PC-9 (cell line): ENCODE measurements at regions of chr15 and their contacts with region 1.

Region 1: GRCh38 chr15:78075490-78076230 is 1.9 kb downstream of the TBC1D2B start:
- DNase-seq: peak in 1 of 2 experiments; percentile 31
- H3K4me3 ChIP-seq: no peak overlapping the region; the same call in 1 of the 2 replicates
- H3K27ac ChIP-seq: no peak overlapping the region
- H3K4me1 ChIP-seq: peaks cover 17% of the 10 kb centered on the region
- H3K27me3 ChIP-seq: no peaks in the 10 kb centered on the region
- CTCF ChIP-seq: no peak

Region 2: DNA sequence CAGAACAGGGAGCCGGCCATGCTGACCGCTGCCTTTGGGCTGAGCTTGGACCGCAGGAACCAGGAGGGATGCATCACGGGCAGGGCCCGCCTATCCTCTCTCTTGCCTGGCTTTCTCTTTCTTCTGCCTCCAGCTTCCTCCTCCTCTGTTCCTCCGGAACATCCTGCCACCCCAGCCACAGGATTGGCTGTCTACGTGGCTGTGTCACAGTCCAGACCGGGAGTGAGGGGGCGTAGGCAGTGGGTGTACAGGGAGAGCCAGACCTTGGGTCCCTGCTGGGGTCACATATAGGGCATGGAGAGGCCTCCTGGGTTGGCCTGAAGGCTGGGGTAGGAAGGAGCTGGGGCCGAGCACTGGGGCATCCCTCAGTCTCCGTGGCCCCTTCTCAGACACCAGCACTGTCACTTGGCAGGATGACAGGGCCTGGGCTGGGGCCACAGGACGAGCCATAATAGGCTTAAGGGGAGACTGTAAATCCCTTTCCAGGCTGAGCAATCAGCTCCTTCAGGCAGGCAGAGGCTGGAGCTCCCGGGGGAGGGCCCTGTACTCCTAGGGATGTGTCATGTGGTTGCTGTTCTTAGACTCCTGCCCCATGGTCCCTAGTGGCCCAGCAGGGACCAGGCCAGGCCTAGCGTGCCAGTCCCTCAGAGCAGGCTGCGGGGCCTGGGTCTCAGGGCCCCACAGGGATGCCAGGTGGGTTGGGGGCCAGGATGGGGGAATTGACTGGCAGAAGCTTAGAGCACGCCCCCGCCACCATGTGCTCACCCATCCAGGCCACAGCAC is 468.4 kb before region 1 on chr15:
- CTCF ChIA-PET with region 1: no interaction called
- POLR2A ChIA-PET with region 1: no interaction called
- intact Hi-C with region 1: no loop called
- DNase-seq: no peak
- H3K4me3 ChIP-seq: no peak overlapping the region
- H3K27ac ChIP-seq: no peak overlapping the region
- H3K4me1 ChIP-seq: no peaks in the 10 kb centered on the region
- H3K27me3 ChIP-seq: peaks cover 7% of the 10 kb centered on the region; the same call in 1 of the 2 replicates
- CTCF ChIP-seq: no peak

Region 3: GRCh38 chr15:78065284-78065872 is 10.3 kb before region 1 on chr15:
- CTCF ChIA-PET with region 1: no interaction called
- POLR2A ChIA-PET with region 1: interaction called, 10 read pairs
- intact Hi-C with region 1: no loop called
- DNase-seq: peak; percentile 74 to 92
- H3K4me3 ChIP-seq: no peak overlapping the region
- H3K27ac ChIP-seq: peak overlapping the region; percentile 66
- H3K4me1 ChIP-seq: peaks cover 48% of the 10 kb centered on the region
- H3K27me3 ChIP-seq: no peaks in the 10 kb centered on the region
- CTCF ChIP-seq: no peak

Region 4: DNA sequence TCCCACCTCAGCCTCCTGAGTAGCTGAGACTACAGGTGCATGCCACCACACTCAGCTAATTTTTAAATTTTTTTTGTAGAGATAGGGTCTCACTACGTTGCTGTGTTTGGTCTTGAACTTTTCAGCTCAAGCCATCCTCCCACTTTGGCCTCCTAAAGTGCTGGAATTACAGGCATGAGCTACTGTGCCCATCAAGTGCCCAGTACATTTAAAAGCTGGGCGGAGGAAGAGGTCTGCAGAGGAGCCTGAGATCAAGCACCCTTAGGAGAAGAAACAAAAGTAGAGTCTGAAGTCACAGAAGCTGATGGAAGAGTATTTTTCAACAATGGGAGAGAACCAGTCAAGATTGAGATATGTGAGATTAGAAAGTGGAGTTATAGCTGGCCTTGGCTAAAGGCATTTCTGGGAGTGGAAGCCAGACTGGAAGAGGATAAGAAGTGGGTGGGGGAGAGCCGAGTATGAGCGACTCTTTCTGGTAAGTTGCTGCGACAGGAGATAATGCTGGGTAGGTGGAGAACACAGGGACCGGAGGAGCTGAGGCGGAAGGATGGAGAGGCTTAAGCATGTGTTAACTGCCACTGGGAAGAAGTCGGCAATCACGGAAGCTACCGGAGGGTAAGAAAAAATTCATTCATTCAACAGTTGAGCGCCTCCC is 361.6 kb after region 1 on chr15:
- CTCF ChIA-PET with region 1: no interaction called
- POLR2A ChIA-PET with region 1: no interaction called
- intact Hi-C with region 1: no loop called
- DNase-seq: no peak
- H3K4me3 ChIP-seq: peak overlapping the region; percentile 80
- H3K27ac ChIP-seq: peak overlapping the region; percentile 38
- H3K4me1 ChIP-seq: peaks cover 14% of the 10 kb centered on the region
- H3K27me3 ChIP-seq: no peaks in the 10 kb centered on the region
- CTCF ChIP-seq: no peak